ENCODE measurements at regions of chr22 and their contacts with region 1.

Region 1: GRCh38 chr22:42836026-42836425 is 21.0 kb downstream of the ARFGAP3 start:
- DNase-seq: no peak
- ATAC-seq: no peak
- H3K4me3 ChIP-seq: no peak overlapping the region
- H3K27ac ChIP-seq: no peak overlapping the region
- H3K4me1 ChIP-seq: peaks cover 27% of the 10 kb centered on the region
- H3K27me3 ChIP-seq: no peaks in the 10 kb centered on the region
- CTCF ChIP-seq: no peak
- EP300 ChIP-seq: no peak
- POLR2A ChIP-seq: no peak
- RAD21 ChIP-seq: no peak

Region 2: DNA sequence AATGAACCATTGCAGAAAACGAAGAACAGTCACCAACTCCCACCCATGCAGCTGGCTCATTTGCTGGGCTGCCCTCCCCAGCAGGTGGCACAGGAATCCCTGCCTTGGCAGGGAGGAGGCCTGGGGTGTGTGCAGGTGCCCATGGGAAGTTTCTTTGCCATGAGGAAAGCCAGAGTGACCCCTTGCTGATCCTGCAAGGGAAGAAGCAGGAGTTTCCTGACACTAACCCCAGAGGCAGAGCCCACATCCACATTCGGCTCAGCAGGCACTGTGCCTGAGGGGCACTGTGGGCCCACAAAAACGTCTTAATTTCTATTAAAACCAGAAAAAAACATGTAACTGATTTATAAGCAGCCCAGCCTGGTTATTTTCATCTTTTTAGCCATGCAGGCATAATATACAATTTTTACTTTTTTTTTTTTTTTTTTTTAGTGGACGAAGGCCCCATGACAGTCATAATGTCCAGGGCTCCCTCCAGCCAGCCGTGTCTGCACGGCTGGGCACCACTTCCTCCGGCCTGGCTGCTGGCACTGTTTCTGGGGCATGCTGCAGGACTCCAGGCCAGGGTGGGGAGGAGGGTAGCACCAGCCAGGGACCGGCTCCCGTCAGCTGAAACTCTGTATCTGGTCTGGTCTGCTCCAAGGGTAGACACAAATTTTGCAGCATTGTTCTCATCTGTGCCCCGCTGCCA is 307.6 kb before region 1 on chr22:
- CTCF ChIA-PET with region 1: no interaction called
- POLR2A ChIA-PET with region 1: no interaction called
- RAD21 ChIA-PET with region 1: no interaction called
- SMC1A ChIA-PET with region 1: no interaction called
- in situ Hi-C with region 1: no loop called
- intact Hi-C with region 1: no loop called
- DNase-seq: no peak
- ATAC-seq: no peak
- H3K4me3 ChIP-seq: no peak overlapping the region
- H3K27ac ChIP-seq: no peak overlapping the region
- H3K4me1 ChIP-seq: peaks cover 12% of the 10 kb centered on the region
- H3K27me3 ChIP-seq: no peaks in the 10 kb centered on the region
- CTCF ChIP-seq: no peak
- EP300 ChIP-seq: no peak
- POLR2A ChIP-seq: no peak
- RAD21 ChIP-seq: no peak

Region 3: GRCh38 chr22:42704896-42705295 is 131.1 kb before region 1 on chr22:
- CTCF ChIA-PET with region 1: no interaction called
- POLR2A ChIA-PET with region 1: no interaction called
- RAD21 ChIA-PET with region 1: no interaction called
- SMC1A ChIA-PET with region 1: no interaction called
- in situ Hi-C with region 1: no loop called
- intact Hi-C with region 1: no loop called
- DNase-seq: no peak
- ATAC-seq: peak; percentile 56
- H3K4me3 ChIP-seq: no peak overlapping the region
- H3K27ac ChIP-seq: no peak overlapping the region
- H3K4me1 ChIP-seq: peaks cover 3% of the 10 kb centered on the region
- H3K27me3 ChIP-seq: no peaks in the 10 kb centered on the region
- CTCF ChIP-seq: no peak
- EP300 ChIP-seq: no peak
- POLR2A ChIP-seq: no peak
- RAD21 ChIP-seq: no peak

Region 4: GRCh38 chr22:42820066-42820763 is 15.8 kb before region 1 on chr22:
- CTCF ChIA-PET with region 1: interaction called, 11 read pairs
- POLR2A ChIA-PET with region 1: no interaction called
- RAD21 ChIA-PET with region 1: interaction called, 3 read pairs
- SMC1A ChIA-PET with region 1: interaction called, 21 read pairs
- in situ Hi-C with region 1: no loop called
- intact Hi-C with region 1: no loop called
- DNase-seq: no peak
- ATAC-seq: no peak
- H3K4me3 ChIP-seq: no peak overlapping the region
- H3K27ac ChIP-seq: no peak overlapping the region
- H3K4me1 ChIP-seq: no peaks in the 10 kb centered on the region
- H3K27me3 ChIP-seq: no peaks in the 10 kb centered on the region
- CTCF ChIP-seq: peak in 2 of 3 experiments; percentile 46 to 49; a peak in 3 of 6 replicates
- EP300 ChIP-seq: no peak
- POLR2A ChIP-seq: no peak
- RAD21 ChIP-seq: peak; percentile 56

Region 5: GRCh38 chr22:42856865-42857704 is 21.1 kb after region 1 on chr22 and contains the start of gene ARFGAP3:
- CTCF ChIA-PET with region 1: interaction called, 4 read pairs
- POLR2A ChIA-PET with region 1: interaction called, 10 read pairs
- RAD21 ChIA-PET with region 1: interaction called, 6 read pairs
- SMC1A ChIA-PET with region 1: interaction called, 4 read pairs
- in situ Hi-C with region 1: no loop called
- intact Hi-C with region 1: no loop called
- DNase-seq: peak; percentile 64
- ATAC-seq: peak; percentile 94
- H3K4me3 ChIP-seq: peak within 1 kb of the TSS; percentile 90
- H3K27ac ChIP-seq: peak within 1 kb of the TSS; percentile 94
- H3K4me1 ChIP-seq: peaks cover 5% of the 10 kb centered on the region
- H3K27me3 ChIP-seq: no peaks in the 10 kb centered on the region
- CTCF ChIP-seq: no peak
- EP300 ChIP-seq: peak in 1 of 2 experiments; percentile 15; a peak in 1 of 4 replicates
- POLR2A ChIP-seq: peak; percentile 89
- RAD21 ChIP-seq: no peak
- polyA plus RNA-seq, gene ARFGAP3: 39.1 to 42.0 TPM

Measured in GM12878 (cell line).